IMR-90 (cell line): ENCODE measurements at regions of chr7 and their contacts with region 1.

Region 1: DNA sequence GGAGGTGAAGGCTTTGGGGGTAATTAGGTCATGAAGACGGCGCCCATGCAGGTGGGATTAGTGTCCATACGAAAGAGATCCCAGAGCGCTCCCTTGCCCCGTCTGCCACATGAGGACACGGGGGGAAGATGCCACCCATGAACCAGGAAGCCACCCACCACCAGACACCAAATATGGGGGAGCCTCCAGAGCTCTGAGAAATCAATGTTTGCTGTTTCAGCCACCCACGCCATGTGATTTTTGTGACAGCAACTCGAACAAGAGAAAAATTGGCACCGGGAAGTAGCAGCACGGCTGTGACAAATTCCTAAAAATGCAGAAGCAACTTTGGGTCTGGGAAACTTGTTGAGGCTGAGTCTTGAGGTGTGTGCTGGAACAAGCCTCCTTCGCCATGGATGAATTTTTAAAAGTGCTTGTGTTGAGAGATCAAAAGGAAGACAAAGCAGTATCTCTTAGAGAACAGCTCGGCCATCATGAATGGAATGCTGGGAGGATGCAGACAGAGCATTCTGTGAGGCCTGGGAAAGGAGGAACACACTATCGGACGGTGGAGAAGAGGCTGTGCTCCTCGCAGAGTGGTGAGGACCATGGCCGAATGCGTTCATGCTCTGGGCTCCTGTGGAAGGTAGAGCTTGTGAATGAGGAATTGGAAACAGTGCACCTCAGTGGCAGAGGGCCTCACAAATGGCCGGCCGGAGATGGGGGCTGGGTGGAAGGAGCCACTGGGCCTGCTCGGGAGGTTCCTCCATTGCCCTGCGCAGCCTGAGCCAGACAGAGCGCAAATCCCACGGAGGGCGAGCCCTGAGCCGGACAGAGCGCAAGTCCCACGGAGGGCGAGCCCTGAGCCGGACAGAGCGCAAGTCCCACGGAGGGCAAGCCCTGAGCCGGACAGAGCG is 277.5 kb downstream of the PTPRN2 start:
- DNase-seq: no peak
- ATAC-seq: no peak
- H3K4me3 ChIP-seq: no peak overlapping the region
- H3K27ac ChIP-seq: no peak overlapping the region
- H3K4me1 ChIP-seq: no peaks in the 10 kb centered on the region
- H3K27me3 ChIP-seq: no peaks in the 10 kb centered on the region
- CTCF ChIP-seq: no peak
- POLR2A ChIP-seq: no peak
- RAD21 ChIP-seq: no peak

Region 2: GRCh38 chr7:158362912-158363905 is 53.1 kb after region 1 on chr7:
- CTCF ChIA-PET with region 1: no interaction called
- POLR2A ChIA-PET with region 1: no interaction called
- dilution Hi-C with region 1: no loop called
- in situ Hi-C with region 1: loop called (anchors 5 kb)
- intact Hi-C with region 1: no loop called
- DNase-seq: no peak
- ATAC-seq: no peak
- H3K4me3 ChIP-seq: no peak overlapping the region
- H3K27ac ChIP-seq: no peak overlapping the region
- H3K4me1 ChIP-seq: no peaks in the 10 kb centered on the region
- H3K27me3 ChIP-seq: no peaks in the 10 kb centered on the region
- CTCF ChIP-seq: no peak
- POLR2A ChIP-seq: no peak
- RAD21 ChIP-seq: no peak